ENCODE measurements at regions of chr5 and their contacts with region 1.

Region 1: DNA sequence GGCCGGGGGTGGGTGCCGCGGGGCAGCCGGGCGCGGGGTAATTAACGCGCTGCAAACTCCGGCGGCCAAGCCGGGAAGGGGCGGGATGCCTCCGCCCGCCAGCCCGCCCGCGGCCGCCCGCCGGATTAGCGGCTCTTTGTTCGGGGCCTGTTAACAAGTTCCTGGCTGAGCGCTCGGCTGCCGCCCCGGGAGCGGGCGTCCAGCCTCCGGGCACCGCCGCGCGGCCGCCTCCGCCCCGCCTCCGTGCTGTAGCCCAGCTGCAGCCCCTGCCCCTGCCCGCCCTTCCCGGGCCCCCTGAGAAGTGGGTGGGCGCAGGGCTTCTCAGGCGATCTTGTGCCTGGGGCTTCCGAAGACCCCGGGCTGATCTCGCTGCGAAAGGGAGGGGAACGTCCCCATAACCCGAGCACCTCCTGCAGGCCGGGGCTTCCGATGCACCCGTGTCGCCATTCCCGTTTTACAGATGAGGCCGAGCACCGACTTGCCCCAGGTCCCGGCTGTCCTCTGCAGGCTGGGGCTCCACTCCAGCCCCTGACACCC is 7.5 kb downstream of the UNC5A start:
- DNase-seq: peak; percentile 86
- H3K4me3 ChIP-seq: peak overlapping the region; percentile 48 to 61
- H3K27ac ChIP-seq: peak overlapping the region in 1 of 2 experiments; percentile 73; a peak in 2 of 4 replicates
- H3K4me1 ChIP-seq: peaks cover 0 to 42% of the 10 kb centered on the region in 2 experiments; a peak in 1 of 4 replicates
- H3K27me3 ChIP-seq: peaks cover 10% of the 10 kb centered on the region
- CTCF ChIP-seq: peak; percentile 60
- EP300 ChIP-seq: no peak
- RAD21 ChIP-seq: peak; percentile 42; the same call in 1 of the 2 replicates

Region 2: DNA sequence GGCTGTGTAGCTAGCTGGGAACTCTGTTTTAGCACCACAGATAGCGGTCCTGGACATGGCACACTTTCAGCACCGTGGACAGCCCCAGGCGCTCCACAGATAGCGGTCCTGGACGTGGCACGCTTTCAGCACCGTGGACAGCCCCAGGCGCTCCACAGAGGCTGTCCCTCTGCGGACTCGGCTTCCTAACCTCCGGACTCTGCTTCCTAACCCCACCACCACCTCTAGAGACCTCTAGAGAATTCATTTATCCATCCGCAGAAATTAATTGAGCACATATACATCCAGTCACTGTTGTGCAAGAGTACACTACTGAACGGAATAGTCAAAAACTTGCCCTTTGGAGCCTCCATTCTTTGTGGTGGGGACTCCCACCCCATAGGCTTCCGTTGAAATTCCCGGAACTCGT is 19.8 kb after region 1 on chr5:
- CTCF ChIA-PET with region 1: interaction called, 30 read pairs
- POLR2A ChIA-PET with region 1: interaction called, 5 read pairs
- DNase-seq: no peak
- H3K4me3 ChIP-seq: no peak overlapping the region
- H3K27ac ChIP-seq: peak overlapping the region in 1 of 2 experiments; percentile 87; a peak in 2 of 4 replicates
- H3K4me1 ChIP-seq: peaks cover 0 to 77% of the 10 kb centered on the region in 2 experiments; a peak in 2 of 4 replicates
- H3K27me3 ChIP-seq: peaks cover 4% of the 10 kb centered on the region; the same call in 1 of the 2 replicates
- CTCF ChIP-seq: no peak
- EP300 ChIP-seq: no peak
- RAD21 ChIP-seq: no peak

Measured in SK-N-SH (cell line).